ENCODE measurements at regions of chr7 and their contacts with region 1.

Region 1: DNA sequence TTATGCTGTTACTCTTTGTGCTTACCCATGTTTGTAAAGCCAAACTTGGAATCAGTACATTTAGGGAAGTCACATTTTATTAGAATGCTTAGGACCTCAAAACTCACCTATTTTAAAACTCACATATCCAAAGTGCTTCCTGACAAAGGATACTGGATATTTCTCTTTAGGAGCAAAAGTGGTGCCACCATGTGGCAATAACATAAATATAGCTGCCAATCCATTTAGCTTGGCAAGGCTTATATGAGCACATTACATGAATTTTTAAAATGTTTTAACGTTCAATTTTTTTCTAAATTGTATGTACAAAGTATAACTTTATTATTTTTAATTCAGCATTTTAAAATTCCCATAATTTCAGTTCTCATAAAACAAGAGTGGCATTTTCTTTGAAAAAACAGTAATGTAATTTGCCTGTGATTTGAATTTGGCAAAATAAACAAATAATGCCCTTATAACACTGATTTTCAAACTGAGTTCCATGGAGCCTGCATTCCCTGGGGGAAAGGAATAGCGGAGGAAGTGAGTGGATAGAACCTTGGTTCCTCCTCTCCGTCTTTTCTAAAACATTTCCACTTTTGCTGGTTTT is 75.4 kb downstream of the HDAC9 start:
- DNase-seq: no peak
- ATAC-seq: peak; percentile 58

Region 2: DNA sequence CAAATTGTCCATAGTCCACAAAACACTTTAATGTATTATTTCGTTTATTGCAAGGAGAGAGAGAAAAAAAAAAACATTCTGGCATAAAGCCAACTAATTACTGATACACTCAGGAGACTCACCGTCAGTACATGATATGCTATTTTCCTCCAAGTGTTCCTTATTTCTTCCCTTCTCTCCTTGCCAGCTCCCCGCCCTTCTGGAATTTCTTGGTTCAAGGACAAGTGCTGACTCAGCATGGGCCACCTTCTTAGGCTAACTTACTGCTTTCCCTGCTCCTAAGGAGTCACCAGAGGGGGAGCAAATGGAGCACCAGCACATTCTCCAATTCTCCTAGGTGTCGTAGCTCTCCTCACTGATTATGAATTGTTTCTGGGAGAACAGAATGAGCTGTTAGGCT is 209.2 kb before region 1 on chr7:
- intact Hi-C with region 1: loop called (anchors 5 kb)
- DNase-seq: no peak
- ATAC-seq: peak; percentile 12

Region 3: GRCh38 chr7:18495412-18496340 is 75.3 kb before region 1 on chr7 and contains the start of gene HDAC9:
- intact Hi-C with region 1: no loop called
- DNase-seq: peak; percentile 37
- ATAC-seq: peak; percentile 92
- total RNA-seq, gene HDAC9: 22.8 TPM

Region 4: GRCh38 chr7:18792871-18793595 is 222.0 kb after region 1 on chr7:
- intact Hi-C with region 1: no loop called
- DNase-seq: no peak
- ATAC-seq: no peak